Thyroid gland (tissue), 4 donors: ENCODE measurements at regions of chr7 and their contacts with region 1.

Region 1: GRCh38 chr7:98841179-98841997 is 28.4 kb downstream of the TMEM130 start:
- DNase-seq: peak; percentile 63 to 68
- H3K4me3 ChIP-seq: no peak overlapping the region
- H3K27ac ChIP-seq: no peak overlapping the region
- H3K4me1 ChIP-seq: no peaks in the 10 kb centered on the region
- H3K27me3 ChIP-seq: no peaks in the 10 kb centered on the region
- CTCF ChIP-seq: peak; percentile 85 to 97 (median 90)
- POLR2A ChIP-seq: no peak

Region 2: DNA sequence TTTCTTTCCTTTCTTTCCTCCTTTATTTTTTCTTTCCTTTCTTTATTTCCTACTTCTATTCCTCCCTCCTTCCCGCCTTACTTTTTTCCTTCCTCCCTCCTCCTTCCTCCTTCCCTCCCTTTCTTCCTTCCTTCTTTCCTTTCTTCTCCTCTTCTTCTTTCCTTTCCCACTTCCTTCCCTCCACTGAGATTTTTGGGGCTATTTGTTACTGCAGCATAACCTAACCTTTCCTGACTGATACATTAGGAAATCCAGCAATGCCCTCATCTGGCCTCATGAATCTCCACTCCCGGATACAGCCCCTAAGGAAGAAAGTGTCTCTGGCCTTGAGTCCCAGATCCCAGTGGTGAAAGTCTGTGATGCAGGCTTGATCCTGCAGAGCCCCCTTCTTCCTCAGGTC is 401.9 kb before region 1 on chr7:
- intact Hi-C with region 1: loop called (anchors 5 kb)
- DNase-seq: no peak
- H3K4me3 ChIP-seq: no peak overlapping the region
- H3K27ac ChIP-seq: no peak overlapping the region
- H3K4me1 ChIP-seq: no peaks in the 10 kb centered on the region
- H3K27me3 ChIP-seq: no peaks in the 10 kb centered on the region
- CTCF ChIP-seq: no peak
- POLR2A ChIP-seq: no peak